Activated T-helper 1 cell treated with anti-CD3 and anti-CD28 coated beads, Interleukin-12 subunit alpha, Interleukin-12 subunit beta, Interleukin-2, Interleukin-4 antibody, amounts not matched to agents 30 ng/mL and 10 ng/mL and 1 ng/mL, durations not matched to agents 14 hours and 24 hours and 36 hours (primary cell): ENCODE measurements at regions of chr22 and their contacts with region 1.

Region 1: GRCh38 chr22:42243802-42244060 is 26.7 kb downstream of the TCF20 start:
- DNase-seq: no peak
- H3K4me3 Mint-ChIP-seq: no peak overlapping the region
- H3K27ac Mint-ChIP-seq: no peak overlapping the region
- H3K4me1 Mint-ChIP-seq: peaks cover 11% of the 10 kb centered on the region
- H3K27me3 Mint-ChIP-seq: no peaks in the 10 kb centered on the region

Region 2: GRCh38 chr22:42300259-42301076 is 56.7 kb after region 1 on chr22:
- intact Hi-C with region 1: loop called (anchors 10 kb)
- DNase-seq: peak; percentile 21
- H3K4me3 Mint-ChIP-seq: peak overlapping the region; percentile 68
- H3K27ac Mint-ChIP-seq: peak overlapping the region; percentile 43
- H3K4me1 Mint-ChIP-seq: peaks cover 44% of the 10 kb centered on the region
- H3K27me3 Mint-ChIP-seq: peaks cover 10% of the 10 kb centered on the region